Activated CD8-positive, alpha-beta T cell treated with anti-CD3 and anti-CD28 coated beads for 36 hours (primary cell): ENCODE measurements at regions of chrX and their contacts with region 1.

Region 1: DNA sequence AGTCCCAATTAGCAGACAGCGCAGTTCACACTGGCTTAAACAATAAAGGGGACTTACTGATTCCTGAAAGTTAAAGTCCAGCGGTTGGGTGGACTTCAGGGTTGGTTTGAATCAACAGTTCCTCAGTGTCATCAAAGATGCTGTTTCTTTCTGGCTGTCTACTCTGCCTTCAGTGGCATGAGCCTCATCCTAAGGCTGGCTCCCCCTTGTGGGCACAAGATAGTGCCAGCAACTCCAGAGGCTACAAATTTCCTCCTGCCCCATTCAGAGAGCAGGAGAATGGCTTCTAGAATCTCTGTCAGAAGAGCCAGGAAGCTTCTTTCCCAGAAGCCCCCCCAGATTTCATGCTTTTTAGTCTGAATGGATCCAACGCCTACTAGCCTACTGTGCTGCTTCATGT is 82.4 kb upstream of the MTM1 start:
- DNase-seq: peak; percentile 59
- ATAC-seq: peak; percentile 38
- H3K4me3 Mint-ChIP-seq: no peak overlapping the region
- H3K27ac Mint-ChIP-seq: no peak overlapping the region
- H3K4me1 Mint-ChIP-seq: peaks cover 24% of the 10 kb centered on the region
- H3K27me3 Mint-ChIP-seq: no peaks in the 10 kb centered on the region
- CTCF ChIP-seq: peak; percentile 33

Region 2: DNA sequence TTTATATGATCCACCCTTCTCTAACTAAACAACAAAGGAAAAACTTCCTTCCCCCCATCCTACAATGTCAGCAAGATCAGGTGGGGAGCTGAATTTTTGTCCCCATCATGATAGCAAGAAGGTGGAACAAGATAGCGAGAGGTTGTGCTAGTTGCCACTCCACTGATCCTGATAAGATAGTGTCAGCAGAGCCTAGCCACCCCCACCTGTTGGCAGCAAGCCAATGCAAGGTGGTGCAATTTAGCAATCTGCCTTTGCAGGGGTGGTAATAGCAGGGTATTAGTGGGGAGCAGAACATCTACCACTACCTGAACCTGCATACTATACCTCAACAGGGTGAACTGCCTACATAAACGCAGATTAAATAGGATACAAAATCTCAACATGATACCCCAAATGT is 203.1 kb before region 1 on chrX:
- CTCF ChIA-PET with region 1: no interaction called
- POLR2A ChIA-PET with region 1: no interaction called
- intact Hi-C with region 1: no loop called
- DNase-seq: no peak
- ATAC-seq: no peak
- H3K4me3 Mint-ChIP-seq: no peak overlapping the region
- H3K27ac Mint-ChIP-seq: no peak overlapping the region
- H3K4me1 Mint-ChIP-seq: no peaks in the 10 kb centered on the region
- H3K27me3 Mint-ChIP-seq: peaks cover 1% of the 10 kb centered on the region
- CTCF ChIP-seq: no peak

Region 3: GRCh38 chrX:150365051-150365989 is 120.7 kb before region 1 on chrX:
- CTCF ChIA-PET with region 1: interaction called, 5 read pairs
- POLR2A ChIA-PET with region 1: interaction called, 3 read pairs
- intact Hi-C with region 1: loop called (anchors 10 kb)
- DNase-seq: peak; percentile 69
- ATAC-seq: peak; percentile 57
- H3K4me3 Mint-ChIP-seq: peak overlapping the region; percentile 73
- H3K27ac Mint-ChIP-seq: peak overlapping the region; percentile 34
- H3K4me1 Mint-ChIP-seq: peaks cover 22% of the 10 kb centered on the region
- H3K27me3 Mint-ChIP-seq: peaks cover 14% of the 10 kb centered on the region
- CTCF ChIP-seq: peak; percentile 60